ENCODE measurements at regions of chr1 and their contacts with region 1.

Region 1: DNA sequence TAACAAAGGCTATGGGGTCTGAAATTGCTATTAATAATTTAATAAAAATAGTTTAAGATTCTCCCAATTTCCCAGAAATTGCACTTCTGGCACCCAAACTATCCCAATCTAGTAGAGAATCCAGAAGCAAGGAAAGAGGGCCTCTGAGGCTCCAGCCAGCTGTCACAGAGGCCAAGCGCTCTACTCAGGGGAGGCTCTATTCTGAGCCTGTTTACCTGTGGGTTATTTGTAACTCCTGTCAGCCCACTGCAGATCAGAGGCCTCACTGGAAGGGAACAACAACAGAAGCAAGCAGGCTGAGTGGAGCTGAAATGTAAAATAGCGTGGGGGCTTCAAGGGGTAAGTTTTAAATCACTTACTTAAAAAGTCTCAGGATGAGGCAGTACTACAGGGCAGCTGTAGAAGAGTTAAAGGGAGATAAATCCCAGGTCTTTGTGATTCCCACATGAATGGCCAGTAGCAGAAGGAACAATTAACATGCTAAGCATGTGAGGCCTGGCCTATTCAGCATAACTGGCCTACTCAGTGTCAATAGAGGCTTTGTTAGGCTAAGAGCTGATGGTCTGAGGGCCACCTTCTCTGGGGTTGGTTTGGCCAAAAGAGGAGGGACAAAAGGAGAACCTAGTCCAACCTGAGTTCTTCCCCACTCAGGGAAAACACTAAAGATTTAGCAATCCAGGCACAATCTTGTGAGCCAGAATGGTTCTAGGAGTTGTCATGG is 12.8 kb downstream of the ZNF687 start:
- DNase-seq: no peak
- H3K4me3 ChIP-seq: no peak overlapping the region
- H3K27ac ChIP-seq: no peak overlapping the region
- H3K4me1 ChIP-seq: peaks cover 0 to 3% of the 10 kb centered on the region in 2 donors
- H3K27me3 ChIP-seq: no peaks in the 10 kb centered on the region
- CTCF ChIP-seq: no peak
- POLR2A ChIP-seq: no peak

Region 2: GRCh38 chr1:150909585-150910180 is 385.2 kb before region 1 on chr1:
- intact Hi-C with region 1: no loop called
- DNase-seq: no peak
- H3K4me3 ChIP-seq: no peak overlapping the region
- H3K27ac ChIP-seq: no peak overlapping the region
- H3K4me1 ChIP-seq: no peaks in the 10 kb centered on the region
- H3K27me3 ChIP-seq: no peaks in the 10 kb centered on the region
- CTCF ChIP-seq: no peak
- POLR2A ChIP-seq: no peak

Region 3: DNA sequence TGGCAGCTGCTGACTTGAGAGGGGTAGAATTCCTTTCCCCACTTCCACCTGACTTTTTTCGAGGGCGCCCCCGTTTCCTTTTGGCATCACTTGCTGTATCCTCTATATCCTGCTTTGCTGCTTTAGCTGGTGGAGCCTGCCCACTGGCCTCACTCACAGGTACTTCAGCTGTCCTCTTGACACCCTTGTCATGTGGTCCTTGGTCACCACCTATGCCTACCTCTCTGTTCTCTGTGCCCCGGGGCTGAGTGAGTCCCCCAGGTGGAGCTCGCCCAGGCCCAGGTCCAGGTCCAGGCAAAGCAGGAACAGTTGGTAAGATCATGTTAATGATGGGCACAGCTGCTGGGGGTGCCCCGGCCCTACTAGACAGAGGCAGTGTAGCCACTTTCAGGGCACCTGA is 47.7 kb after region 1 on chr1:
- intact Hi-C with region 1: loop called (anchors 2 kb)
- DNase-seq: peak; percentile 56 to 72
- H3K4me3 ChIP-seq: no peak overlapping the region
- H3K27ac ChIP-seq: no peak overlapping the region
- H3K4me1 ChIP-seq: peaks cover 7 to 12% of the 10 kb centered on the region in 2 donors
- H3K27me3 ChIP-seq: no peaks in the 10 kb centered on the region
- CTCF ChIP-seq: no peak
- POLR2A ChIP-seq: no peak

Region 4: GRCh38 chr1:151356696-151357095 is 61.8 kb after region 1 on chr1:
- intact Hi-C with region 1: no loop called
- DNase-seq: no peak
- H3K4me3 ChIP-seq: no peak overlapping the region
- H3K27ac ChIP-seq: no peak overlapping the region
- H3K4me1 ChIP-seq: peaks cover 8 to 9% of the 10 kb centered on the region in 2 donors
- H3K27me3 ChIP-seq: no peaks in the 10 kb centered on the region
- CTCF ChIP-seq: no peak
- POLR2A ChIP-seq: no peak